ENCODE measurements at regions of chr2 and their contacts with region 1.

Region 1: GRCh38 chr2:4499316-4500030 is 796.1 kb downstream of the DCDC2C start:
- ATAC-seq: peak in 4 of 8 experiments; percentile 15 to 54 (median 44)
- H3K4me3 ChIP-seq: no peak overlapping the region
- H3K27ac ChIP-seq: no peak overlapping the region
- H3K4me1 ChIP-seq: no peaks in the 10 kb centered on the region

Region 2: GRCh38 chr2:4246364-4247131 is 252.9 kb before region 1 on chr2:
- in situ Hi-C with region 1: no loop called
- ATAC-seq: peak in 3 of 8 experiments; percentile 11 to 37 (median 26)
- H3K4me3 ChIP-seq: no peak overlapping the region
- H3K27ac ChIP-seq: no peak overlapping the region
- H3K4me1 ChIP-seq: peaks cover 6 to 7% of the 10 kb centered on the region in 2 donors

Region 3: GRCh38 chr2:4597400-4597799 is 97.9 kb after region 1 on chr2:
- in situ Hi-C with region 1: loop called in 1 of 9 experiments (anchors 25 kb)
- ATAC-seq: peak in 5 of 8 experiments; percentile 45 to 94 (median 62)
- H3K4me3 ChIP-seq: no peak overlapping the region
- H3K27ac ChIP-seq: no peak overlapping the region
- H3K4me1 ChIP-seq: peaks cover 0 to 11% of the 10 kb centered on the region in 2 donors

Measured in motor neuron (in vitro differentiated cells).